Ovary (tissue), 10 donors: ENCODE measurements at regions of chr1 and their contacts with region 1.

Region 1: DNA sequence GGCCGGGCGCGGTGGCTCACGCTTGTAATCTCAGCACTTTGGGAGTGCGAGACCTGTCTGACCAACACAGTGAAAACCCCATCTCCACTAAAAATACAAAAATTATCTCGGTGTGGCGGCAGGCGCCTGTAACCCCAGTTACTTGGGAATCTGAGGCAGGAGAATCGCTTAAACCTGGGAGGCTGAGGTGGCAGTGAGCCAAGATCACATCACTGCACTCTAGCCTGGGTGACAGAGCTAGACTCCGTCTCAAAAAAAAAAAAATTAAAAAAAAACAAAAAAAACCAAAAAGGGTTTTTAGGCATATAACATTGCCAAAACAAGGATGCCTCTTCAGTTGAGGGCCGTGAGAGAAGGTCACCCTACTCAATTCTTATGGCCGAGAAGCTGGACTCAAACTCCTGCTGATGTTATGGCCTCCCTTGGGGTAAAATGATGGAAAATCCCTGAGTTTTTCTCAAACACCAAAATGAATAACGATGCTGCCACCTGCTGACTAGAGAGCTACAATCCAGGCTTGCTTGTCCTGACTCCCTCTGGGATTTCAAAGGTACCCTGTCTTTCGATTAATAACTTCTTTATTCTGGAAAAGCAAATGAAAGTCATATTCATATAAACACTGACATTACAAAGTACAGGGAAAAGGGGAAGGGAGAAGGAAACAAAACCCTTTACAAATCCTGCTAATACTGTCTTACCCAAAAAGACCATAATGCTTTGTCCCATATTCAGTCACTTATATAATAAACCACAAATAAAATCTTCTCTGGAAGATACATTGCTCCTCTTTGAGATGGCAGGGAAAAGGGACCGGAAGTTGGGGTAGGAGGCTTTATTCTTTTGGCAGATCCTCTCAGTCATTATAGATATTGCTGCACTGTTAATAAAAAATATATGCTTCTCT is 10.7 kb downstream of the RAB42 start:
- DNase-seq: peak; percentile 54 to 78 (median 62)
- H3K4me3 ChIP-seq: no peak overlapping the region
- H3K27ac ChIP-seq: peak overlapping the region in 1 of 2 donors; percentile 14
- H3K4me1 ChIP-seq: peaks cover 2% of the 10 kb centered on the region
- H3K27me3 ChIP-seq: no peaks in the 10 kb centered on the region
- CTCF ChIP-seq: peak; percentile 42 to 81 (median 74)
- EP300 ChIP-seq: no peak
- POLR2A ChIP-seq: no peak

Region 2: DNA sequence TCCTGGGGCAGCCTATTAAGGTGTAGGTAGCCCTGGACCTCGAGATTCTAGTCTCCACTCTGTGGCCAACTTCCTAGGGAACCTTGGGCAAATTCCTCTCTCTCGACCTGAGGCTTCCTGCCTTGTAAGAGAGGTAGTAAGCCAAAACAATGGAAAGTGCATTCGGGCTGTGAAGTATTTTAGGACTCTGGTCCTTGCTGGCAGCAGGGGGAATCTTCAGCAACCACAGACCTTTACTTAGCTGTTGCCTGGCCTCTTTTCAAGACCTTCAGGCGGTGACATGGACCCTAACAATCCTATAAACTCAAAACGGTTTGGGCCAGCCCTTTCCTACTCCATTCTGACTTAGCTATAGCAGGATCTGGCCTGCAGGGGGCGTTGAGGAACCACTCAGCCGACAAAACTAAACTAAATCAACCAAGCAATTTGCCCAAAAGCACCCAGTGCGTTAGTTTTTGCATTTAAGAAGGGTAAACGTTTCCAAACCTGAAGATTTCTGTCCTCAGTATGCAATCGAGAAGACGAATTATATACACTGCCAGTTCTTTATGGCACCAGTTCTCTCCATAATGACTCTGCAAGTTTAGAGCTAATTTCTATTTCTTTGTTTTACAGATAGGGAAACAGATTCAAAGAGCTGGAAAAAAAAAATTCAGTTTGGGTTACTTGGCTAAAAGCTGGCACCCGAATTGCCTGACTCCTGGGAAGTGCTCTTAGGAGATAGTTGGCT is 354.3 kb before region 1 on chr1:
- intact Hi-C with region 1: loop called in 1 of 4 experiments (anchors 5 kb)
- DNase-seq: peak; percentile 72 to 87 (median 82)
- H3K4me3 ChIP-seq: no peak overlapping the region
- H3K27ac ChIP-seq: peak overlapping the region; percentile 61 to 62
- H3K4me1 ChIP-seq: peaks cover 3% of the 10 kb centered on the region
- H3K27me3 ChIP-seq: no peaks in the 10 kb centered on the region
- CTCF ChIP-seq: peak; percentile 80 to 93 (median 87)
- EP300 ChIP-seq: no peak
- POLR2A ChIP-seq: no peak

Region 3: DNA sequence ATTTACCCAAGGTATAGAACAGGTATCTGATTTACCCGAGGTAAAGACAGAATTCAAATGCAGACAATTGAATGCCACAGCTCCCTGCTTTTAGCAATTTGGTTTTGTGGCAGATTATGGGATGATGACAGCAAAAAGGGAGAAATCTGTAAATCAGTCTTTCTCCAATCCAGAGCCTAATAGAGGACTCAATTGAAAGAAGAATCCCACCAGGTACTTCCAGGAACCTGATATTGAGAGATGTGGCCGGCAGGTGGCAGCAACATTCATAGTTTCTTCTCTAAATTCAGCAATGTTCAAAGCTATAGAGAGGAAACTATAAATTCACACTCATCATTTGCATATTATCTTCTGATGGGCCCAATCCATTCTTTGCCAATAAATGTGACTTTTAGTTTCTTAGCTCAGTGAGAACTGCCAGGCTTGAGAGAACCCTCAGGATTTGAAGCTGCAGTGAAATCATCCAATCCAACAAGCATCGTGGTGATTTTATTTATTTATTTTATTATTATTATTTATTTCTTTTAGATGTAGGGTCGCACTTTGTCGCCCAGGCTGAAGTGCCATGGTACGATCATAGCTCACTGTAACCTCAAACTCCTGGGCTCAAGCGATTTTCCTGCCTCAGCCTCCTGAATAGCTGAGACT is 243.1 kb before region 1 on chr1:
- intact Hi-C with region 1: loop called in 2 of 4 experiments (anchors 5 kb)
- DNase-seq: peak; percentile 58 to 84 (median 78)
- H3K4me3 ChIP-seq: no peak overlapping the region
- H3K27ac ChIP-seq: no peak overlapping the region
- H3K4me1 ChIP-seq: no peaks in the 10 kb centered on the region
- H3K27me3 ChIP-seq: no peaks in the 10 kb centered on the region
- CTCF ChIP-seq: peak; percentile 37 to 55 (median 40)
- EP300 ChIP-seq: no peak
- POLR2A ChIP-seq: no peak

Region 4: GRCh38 chr1:28409090-28409489 is 193.7 kb before region 1 on chr1:
- intact Hi-C with region 1: loop called in 1 of 4 experiments (anchors 10 kb)
- DNase-seq: no peak
- H3K4me3 ChIP-seq: no peak overlapping the region
- H3K27ac ChIP-seq: no peak overlapping the region
- H3K4me1 ChIP-seq: no peaks in the 10 kb centered on the region
- H3K27me3 ChIP-seq: no peaks in the 10 kb centered on the region
- CTCF ChIP-seq: no peak
- EP300 ChIP-seq: no peak
- POLR2A ChIP-seq: no peak

Region 5: DNA sequence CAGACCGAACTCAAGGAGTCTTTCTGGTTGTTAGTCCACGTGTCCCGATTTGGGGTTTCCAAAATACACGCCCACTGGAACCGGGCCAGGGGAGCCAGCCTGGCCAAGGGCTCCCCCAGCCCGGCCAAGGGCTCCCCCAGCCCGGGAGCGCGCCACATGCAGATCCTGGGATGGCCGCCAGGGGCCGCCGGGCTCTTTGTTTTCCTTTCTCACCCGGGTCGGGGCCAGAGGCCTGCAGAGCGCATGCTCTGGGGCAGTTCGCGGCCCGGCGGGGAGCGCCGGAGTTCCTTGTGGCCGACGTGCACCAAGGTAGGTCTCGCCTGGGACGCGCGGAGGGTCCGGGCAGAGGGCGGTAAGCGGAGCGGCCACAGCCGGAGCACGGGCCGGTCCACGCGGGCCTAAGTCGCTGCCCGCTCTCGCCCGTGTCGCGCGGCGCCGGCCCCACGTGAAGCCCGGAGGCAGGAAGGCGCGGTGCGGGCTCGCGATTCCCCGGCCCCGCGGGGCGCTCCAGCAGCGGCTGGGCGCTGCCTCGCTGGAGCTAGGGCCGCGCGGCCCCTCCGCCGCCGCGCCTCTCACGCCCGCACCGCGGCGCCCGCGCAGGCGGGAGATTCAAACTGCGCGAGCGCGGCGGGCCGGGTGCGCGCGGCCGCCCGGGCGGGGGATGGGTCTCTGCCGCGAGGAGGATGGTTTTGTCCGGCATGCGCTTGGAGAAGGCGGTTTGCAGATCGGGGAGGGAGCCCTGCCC is 84.6 kb before region 1 on chr1:
- intact Hi-C with region 1: loop called in 3 of 4 experiments (anchors 2 to 10 kb)
- DNase-seq: peak; percentile 90 to 96 (median 93)
- H3K4me3 ChIP-seq: peak overlapping the region; percentile 58
- H3K27ac ChIP-seq: peak overlapping the region; percentile 54 to 83
- H3K4me1 ChIP-seq: peaks cover 5% of the 10 kb centered on the region
- H3K27me3 ChIP-seq: no peaks in the 10 kb centered on the region
- CTCF ChIP-seq: peak; percentile 93 to 96 (median 96)
- EP300 ChIP-seq: no peak
- POLR2A ChIP-seq: peak; percentile 34